Activated T-helper 1 cell treated with anti-CD3 and anti-CD28 coated beads, Interleukin-12 subunit alpha, Interleukin-12 subunit beta, Interleukin-2, Interleukin-4 antibody, amounts not matched to agents 30 ng/mL and 10 ng/mL and 1 ng/mL, durations not matched to agents 14 hours and 24 hours and 36 hours (primary cell): ENCODE measurements at regions of chr7 and their contacts with region 1.

Region 1: DNA sequence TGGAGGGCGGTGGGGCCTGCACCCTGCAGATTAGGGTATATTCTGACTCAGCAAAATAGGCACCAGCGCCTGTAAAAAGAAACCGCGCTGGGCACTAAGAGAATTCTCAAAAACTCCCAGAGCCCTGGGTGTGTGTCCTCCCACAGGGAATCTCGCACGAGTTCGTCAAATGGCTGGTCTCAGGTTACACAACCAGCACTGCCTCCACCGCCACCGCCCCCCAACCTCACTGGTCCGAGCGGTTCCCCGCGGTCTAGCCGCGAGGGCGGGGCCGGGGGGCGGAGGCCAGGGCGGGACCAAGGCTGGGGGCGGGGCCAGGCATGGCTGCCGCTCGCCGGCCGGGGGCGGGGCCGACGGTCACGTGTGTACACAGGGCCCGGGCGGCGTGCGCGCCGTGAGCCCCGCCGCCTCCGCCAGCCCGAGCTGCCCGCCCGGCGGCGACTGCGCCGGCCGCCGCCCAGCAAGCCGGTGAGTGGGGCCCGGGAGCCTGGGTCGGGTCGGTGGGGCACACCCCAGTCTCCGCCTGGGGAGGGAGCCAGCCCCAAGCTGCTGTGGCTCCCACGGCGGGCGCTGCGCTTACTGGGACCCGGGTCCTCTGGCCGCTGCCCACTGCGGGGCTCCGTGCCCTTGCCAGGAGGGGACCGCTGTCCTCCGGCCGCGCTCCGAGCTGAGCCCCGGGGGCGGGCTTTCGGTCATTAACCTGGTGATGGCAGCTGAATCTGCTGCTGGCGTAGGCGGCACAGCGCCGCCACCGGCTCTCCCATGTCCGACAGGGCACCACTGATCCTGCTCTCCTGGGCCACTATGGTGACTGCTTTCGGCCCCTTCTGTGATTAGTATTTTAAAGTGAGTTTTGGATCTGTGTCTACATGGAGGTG is at the start of gene GPR146:
- DNase-seq: peak; percentile 85
- H3K4me3 Mint-ChIP-seq: peak within 1 kb of the TSS; percentile 83
- H3K27ac Mint-ChIP-seq: peak within 1 kb of the TSS; percentile 48
- H3K4me1 Mint-ChIP-seq: peaks cover 66% of the 10 kb centered on the region
- H3K27me3 Mint-ChIP-seq: peaks cover 1% of the 10 kb centered on the region
- total RNA-seq, gene GPR146: 2.2 and 2.8 TPM in 2 replicates

Region 2: GRCh38 chr7:901381-902154 is 142.9 kb before region 1 on chr7:
- intact Hi-C with region 1: loop called (anchors 1 kb)
- DNase-seq: peak; percentile 37
- H3K4me3 Mint-ChIP-seq: no peak overlapping the region
- H3K27ac Mint-ChIP-seq: no peak overlapping the region
- H3K4me1 Mint-ChIP-seq: no peaks in the 10 kb centered on the region
- H3K27me3 Mint-ChIP-seq: peaks cover 5% of the 10 kb centered on the region

Region 3: GRCh38 chr7:992709-993607 is 51.5 kb before region 1 on chr7:
- intact Hi-C with region 1: loop called (anchors 1 kb)
- DNase-seq: peak; percentile 86
- H3K4me3 Mint-ChIP-seq: no peak overlapping the region
- H3K27ac Mint-ChIP-seq: peak overlapping the region; percentile 40
- H3K4me1 Mint-ChIP-seq: peaks cover 5% of the 10 kb centered on the region
- H3K27me3 Mint-ChIP-seq: no peaks in the 10 kb centered on the region

Region 4: GRCh38 chr7:1065263-1066260 is 21.1 kb after region 1 on chr7:
- intact Hi-C with region 1: loop called (anchors 1 kb)
- DNase-seq: peak; percentile 74
- H3K4me3 Mint-ChIP-seq: no peak overlapping the region
- H3K27ac Mint-ChIP-seq: no peak overlapping the region
- H3K4me1 Mint-ChIP-seq: peaks cover 4% of the 10 kb centered on the region
- H3K27me3 Mint-ChIP-seq: no peaks in the 10 kb centered on the region

Region 5: DNA sequence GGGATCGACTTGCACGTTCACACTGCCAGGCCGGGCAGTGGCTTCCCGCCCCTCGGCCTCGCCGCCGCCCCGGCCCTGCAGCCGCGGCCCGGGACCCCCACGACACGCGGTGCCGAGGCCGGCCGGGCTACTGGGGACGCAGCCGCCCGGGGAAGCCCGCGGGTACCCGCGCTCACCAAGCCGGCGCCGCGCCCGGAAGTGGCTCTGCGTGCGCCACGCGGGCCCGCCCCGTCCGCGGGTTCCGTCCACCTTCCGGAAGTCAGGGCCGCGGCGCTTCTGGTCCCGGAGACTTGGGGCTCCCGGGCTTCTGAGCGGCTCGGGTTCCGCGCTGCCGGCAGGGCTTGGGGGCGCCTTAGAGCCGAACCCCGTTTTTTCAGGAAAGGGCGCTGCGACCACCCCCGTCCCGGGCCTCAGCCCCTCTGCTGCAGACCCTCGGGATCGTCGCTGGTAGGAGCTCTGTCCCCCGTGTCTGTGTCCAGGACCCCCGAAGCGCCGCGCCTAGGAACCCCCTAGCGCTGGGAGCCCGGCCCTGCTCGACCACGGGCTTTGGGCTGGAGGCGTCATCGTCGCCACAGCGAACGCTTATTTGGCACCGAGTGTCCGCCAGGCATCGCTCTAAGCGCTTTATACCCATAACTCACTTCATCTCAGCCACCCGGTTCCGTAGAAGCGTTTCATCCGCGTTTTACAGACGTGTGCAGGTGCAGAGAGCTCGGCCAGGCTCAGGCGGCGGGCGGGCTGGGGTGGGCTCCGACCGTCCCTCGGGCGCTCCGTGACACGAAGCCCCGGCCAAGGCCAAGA is 525.6 kb after region 1 on chr7 and contains the start of gene PSMG3:
- intact Hi-C with region 1: loop called (anchors 2 kb)
- DNase-seq: peak; percentile 86
- H3K4me3 Mint-ChIP-seq: peak within 1 kb of the TSS; percentile 89
- H3K27ac Mint-ChIP-seq: peak within 1 kb of the TSS; percentile 81
- H3K4me1 Mint-ChIP-seq: peaks cover 31% of the 10 kb centered on the region
- H3K27me3 Mint-ChIP-seq: no peaks in the 10 kb centered on the region
- total RNA-seq, gene PSMG3: 55.7 and 56.0 TPM in 2 replicates

Region 6: GRCh38 chr7:1912593-1913465 is 868.4 kb after region 1 on chr7:
- intact Hi-C with region 1: no loop called
- DNase-seq: no peak
- H3K4me3 Mint-ChIP-seq: no peak overlapping the region
- H3K27ac Mint-ChIP-seq: no peak overlapping the region
- H3K4me1 Mint-ChIP-seq: no peaks in the 10 kb centered on the region
- H3K27me3 Mint-ChIP-seq: peaks cover 3% of the 10 kb centered on the region